Ascending aorta (tissue), 2 donors: ENCODE measurements at regions of chr1 and their contacts with region 1.

Region 1: DNA sequence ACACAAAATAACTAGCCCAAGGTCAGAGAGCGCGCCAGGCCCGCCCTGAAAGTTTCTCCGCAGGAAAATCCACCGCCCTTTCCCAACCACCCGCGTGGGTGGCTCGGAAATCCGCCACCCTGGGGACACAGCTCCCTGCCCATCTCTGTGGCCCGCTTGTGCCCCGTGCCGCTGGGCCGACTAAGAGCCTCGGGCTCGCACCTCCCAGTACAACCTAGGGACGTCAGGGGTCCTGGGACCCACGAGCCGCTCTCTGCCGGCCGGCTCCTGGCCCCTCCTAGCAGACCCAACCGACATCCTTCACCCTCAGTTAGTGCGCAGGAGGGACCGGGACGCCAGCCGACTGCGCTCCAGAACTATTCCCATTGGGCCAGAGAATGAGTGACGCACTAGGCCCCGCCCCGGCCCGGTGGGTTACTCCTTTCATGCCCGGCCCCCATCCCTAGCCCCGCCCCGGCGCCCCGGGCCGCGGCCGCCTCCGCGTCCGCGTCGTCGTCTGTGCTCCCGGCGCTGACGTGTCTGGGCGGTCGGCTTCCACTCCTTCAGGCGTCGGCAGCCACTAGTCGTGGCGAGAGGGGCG is 395 bp upstream of the UAP1 start:
- DNase-seq: peak; percentile 95 to 99
- H3K4me3 ChIP-seq: peak overlapping the region; percentile 98 to 100
- H3K27ac ChIP-seq: peak overlapping the region; percentile 99
- H3K4me1 ChIP-seq: peaks cover 3 to 12% of the 10 kb centered on the region in 2 donors
- H3K27me3 ChIP-seq: no peaks in the 10 kb centered on the region
- CTCF ChIP-seq: no peak

Region 2: GRCh38 chr1:162497723-162498500 is 63.2 kb before region 1 on chr1 and contains the start of gene UHMK1:
- intact Hi-C with region 1: loop called (anchors 5 kb)
- DNase-seq: peak; percentile 71 to 97
- H3K4me3 ChIP-seq: peak within 1 kb of the TSS; percentile 85 to 99
- H3K27ac ChIP-seq: peak within 1 kb of the TSS; percentile 96 to 97
- H3K4me1 ChIP-seq: peaks cover 4 to 11% of the 10 kb centered on the region in 2 donors
- H3K27me3 ChIP-seq: no peaks in the 10 kb centered on the region
- CTCF ChIP-seq: no peak
- total RNA-seq, gene UHMK1: 13.6 TPM

Region 3: GRCh38 chr1:162541619-162542141 is 19.4 kb before region 1 on chr1:
- intact Hi-C with region 1: loop called (anchors 1 kb)
- DNase-seq: peak in 1 of 2 donors; percentile 87
- H3K4me3 ChIP-seq: peak overlapping the region in 1 of 2 donors; percentile 34
- H3K27ac ChIP-seq: peak overlapping the region; percentile 66 to 73
- H3K4me1 ChIP-seq: peaks cover 0 to 11% of the 10 kb centered on the region in 2 donors
- H3K27me3 ChIP-seq: no peaks in the 10 kb centered on the region
- CTCF ChIP-seq: no peak

Region 4: DNA sequence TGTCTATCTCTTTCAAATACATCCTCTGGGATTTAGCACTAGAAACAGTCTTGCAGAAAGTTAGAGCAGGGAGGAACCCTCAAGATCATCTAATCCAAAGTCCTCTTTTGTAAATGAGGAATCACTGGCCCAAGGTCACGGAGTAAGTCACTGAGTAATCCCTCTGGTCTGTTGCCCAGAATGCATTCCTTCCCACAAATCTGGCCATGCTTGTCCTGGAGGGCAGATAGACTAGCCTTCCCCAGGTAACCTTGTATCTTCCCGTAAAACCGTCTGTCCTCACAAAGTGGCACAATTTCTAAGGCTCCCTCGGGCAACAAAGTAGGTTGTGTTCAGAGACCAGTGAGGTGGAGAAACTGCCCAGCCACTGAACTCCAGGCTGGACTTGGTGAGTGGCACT is 117.3 kb after region 1 on chr1:
- intact Hi-C with region 1: no loop called
- DNase-seq: no peak
- H3K4me3 ChIP-seq: no peak overlapping the region
- H3K27ac ChIP-seq: peak overlapping the region in 1 of 2 donors; percentile 22
- H3K4me1 ChIP-seq: peaks cover 3 to 34% of the 10 kb centered on the region in 2 donors
- H3K27me3 ChIP-seq: no peaks in the 10 kb centered on the region
- CTCF ChIP-seq: no peak